T-cell (primary cell): ENCODE measurements at regions of chr3 and their contacts with region 1.

Region 1: DNA sequence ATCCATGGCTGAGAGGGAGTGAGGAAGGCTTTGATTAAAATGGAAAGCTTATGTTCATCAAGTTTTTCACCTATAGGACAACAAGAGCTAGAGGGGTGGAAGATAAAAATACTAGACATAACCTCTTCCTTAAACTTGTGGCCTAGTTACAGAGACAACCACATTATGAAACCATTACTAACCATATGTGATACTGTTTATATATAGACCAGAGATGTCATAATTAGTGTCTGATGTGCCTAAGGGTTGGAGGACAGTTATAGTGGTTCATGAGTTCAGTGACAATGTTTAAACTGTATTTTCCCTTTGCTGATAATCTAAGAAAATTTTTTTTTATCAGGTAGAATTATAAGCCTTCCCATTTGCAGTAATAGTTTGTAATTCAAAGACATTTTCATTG is 23.7 kb downstream of the PHLDB2 start:
- DNase-seq: no peak
- ATAC-seq: no peak
- H3K4me3 ChIP-seq: no peak overlapping the region
- H3K4me3 Mint-ChIP-seq: no peak overlapping the region
- H3K27ac ChIP-seq: no peak overlapping the region
- H3K27ac Mint-ChIP-seq: no peak overlapping the region
- H3K4me1 ChIP-seq: no peaks in the 10 kb centered on the region
- H3K4me1 Mint-ChIP-seq: no peaks in the 10 kb centered on the region
- H3K27me3 ChIP-seq: no peaks in the 10 kb centered on the region
- H3K27me3 Mint-ChIP-seq: peaks cover 0 to 6% of the 10 kb centered on the region in 2 donors

Region 2: DNA sequence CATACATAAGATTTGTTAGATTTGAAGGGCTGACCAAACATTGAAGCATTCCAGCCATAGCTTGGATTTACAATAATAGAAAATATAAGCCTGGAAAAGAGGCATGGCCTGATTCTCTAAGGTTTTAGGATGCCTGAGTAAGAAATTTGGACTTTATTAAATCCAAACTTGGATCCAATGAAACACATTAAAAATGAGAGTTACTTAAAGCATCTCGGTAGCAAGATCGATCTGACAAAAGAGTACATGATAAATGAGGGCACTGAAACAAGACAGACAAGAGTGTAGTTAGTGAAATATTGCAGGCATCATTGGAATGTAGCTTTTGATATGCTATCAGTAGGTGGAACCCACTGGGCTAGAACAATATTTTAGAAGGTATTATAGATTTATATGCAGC is 1689.7 kb before region 1 on chr3:
- CTCF ChIA-PET with region 1: no interaction called
- POLR2A ChIA-PET with region 1: no interaction called
- DNase-seq: no peak
- ATAC-seq: no peak
- H3K4me3 ChIP-seq: no peak overlapping the region
- H3K4me3 Mint-ChIP-seq: no peak overlapping the region
- H3K27ac ChIP-seq: no peak overlapping the region
- H3K27ac Mint-ChIP-seq: no peak overlapping the region
- H3K4me1 ChIP-seq: no peaks in the 10 kb centered on the region
- H3K4me1 Mint-ChIP-seq: no peaks in the 10 kb centered on the region
- H3K27me3 ChIP-seq: no peaks in the 10 kb centered on the region
- H3K27me3 Mint-ChIP-seq: peaks cover 0 to 7% of the 10 kb centered on the region in 2 donors

Region 3: GRCh38 chr3:110995461-110996231 is 887.2 kb before region 1 on chr3:
- CTCF ChIA-PET with region 1: no interaction called
- POLR2A ChIA-PET with region 1: interaction called in 1 of 2 experiments, 10 read pairs
- DNase-seq: no peak
- ATAC-seq: no peak
- H3K4me3 ChIP-seq: no peak overlapping the region
- H3K4me3 Mint-ChIP-seq: no peak overlapping the region
- H3K27ac ChIP-seq: no peak overlapping the region
- H3K27ac Mint-ChIP-seq: no peak overlapping the region
- H3K4me1 ChIP-seq: no peaks in the 10 kb centered on the region
- H3K4me1 Mint-ChIP-seq: no peaks in the 10 kb centered on the region
- H3K27me3 ChIP-seq: peaks cover 0 to 7% of the 10 kb centered on the region in 2 experiments
- H3K27me3 Mint-ChIP-seq: peaks cover 5 to 9% of the 10 kb centered on the region in 2 donors